GM18951 (cell line): ENCODE measurements at regions of chr5 and their contacts with region 1.

Region 1: DNA sequence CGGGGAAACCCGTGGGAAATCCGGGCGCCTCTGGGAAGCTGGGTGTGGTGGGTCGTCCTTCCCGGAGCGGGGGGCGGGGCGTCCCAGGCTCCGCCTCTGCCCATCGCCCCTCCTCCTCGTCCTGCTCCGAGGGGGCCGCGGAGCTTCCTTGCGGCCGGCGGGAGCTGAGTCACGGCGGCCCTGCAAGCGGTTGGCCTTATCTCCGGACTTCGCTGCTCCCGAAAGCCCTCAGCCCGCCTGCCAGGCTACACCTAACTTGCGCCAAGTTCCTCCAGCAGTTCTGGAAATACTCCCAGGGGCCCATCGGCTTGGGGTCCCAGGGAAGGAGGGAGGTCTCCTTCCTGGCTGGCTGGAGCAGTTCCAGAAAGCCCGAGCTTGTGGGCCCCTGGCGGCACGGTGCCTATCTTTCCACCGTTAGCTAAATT is 54.1 kb upstream of the CDKN2AIPNL start:
- POLR2A ChIP-seq: peak; percentile 85

Region 2: DNA sequence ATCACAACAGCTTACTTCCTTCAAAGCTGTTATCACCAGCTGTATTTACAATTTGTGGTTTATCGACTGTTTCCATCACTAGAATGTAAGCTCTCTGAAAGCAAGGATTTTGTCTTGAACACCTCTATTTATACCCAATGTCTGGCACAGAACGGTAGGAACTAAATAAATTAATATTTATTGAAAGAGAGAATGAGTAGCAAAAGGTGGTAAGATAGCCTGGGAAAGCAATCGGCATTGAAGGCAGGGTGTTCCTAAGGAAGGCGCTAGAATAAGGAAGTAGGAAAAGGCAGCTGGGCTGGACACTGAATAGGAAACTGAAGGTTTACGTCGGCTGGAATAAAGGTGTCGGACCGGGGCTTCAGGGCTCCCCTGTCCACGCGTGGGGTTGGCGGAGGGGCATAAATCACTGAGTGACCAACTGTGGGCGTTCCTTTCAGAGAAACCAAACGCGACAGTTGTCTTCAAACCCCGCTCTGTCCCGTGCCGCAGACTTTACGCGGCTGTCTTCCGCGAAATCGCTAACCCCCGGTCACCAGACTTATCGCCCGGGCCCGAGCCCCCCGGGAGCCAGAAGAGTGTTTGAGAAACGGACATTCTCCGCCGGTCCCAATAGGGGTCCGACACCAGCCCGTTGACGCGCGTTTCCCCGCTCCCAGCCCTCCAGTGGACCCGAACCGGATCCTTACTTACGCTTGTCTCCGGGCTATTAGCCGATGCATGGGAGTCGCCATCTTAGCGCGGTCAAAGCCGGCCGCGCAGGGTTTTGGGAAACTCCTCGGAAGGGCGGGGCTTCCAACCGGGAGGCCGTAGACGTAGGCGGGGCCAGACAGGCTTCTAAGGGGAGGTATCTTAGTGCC is 1439.8 kb before region 1 on chr5 and contains the start of gene ZCCHC10:
- in situ Hi-C with region 1: loop called (anchors 25 kb)
- POLR2A ChIP-seq: peak; percentile 90

Region 3: GRCh38 chr5:133610489-133611356 is 855.1 kb before region 1 on chr5:
- in situ Hi-C with region 1: no loop called
- POLR2A ChIP-seq: no peak

Region 4: DNA sequence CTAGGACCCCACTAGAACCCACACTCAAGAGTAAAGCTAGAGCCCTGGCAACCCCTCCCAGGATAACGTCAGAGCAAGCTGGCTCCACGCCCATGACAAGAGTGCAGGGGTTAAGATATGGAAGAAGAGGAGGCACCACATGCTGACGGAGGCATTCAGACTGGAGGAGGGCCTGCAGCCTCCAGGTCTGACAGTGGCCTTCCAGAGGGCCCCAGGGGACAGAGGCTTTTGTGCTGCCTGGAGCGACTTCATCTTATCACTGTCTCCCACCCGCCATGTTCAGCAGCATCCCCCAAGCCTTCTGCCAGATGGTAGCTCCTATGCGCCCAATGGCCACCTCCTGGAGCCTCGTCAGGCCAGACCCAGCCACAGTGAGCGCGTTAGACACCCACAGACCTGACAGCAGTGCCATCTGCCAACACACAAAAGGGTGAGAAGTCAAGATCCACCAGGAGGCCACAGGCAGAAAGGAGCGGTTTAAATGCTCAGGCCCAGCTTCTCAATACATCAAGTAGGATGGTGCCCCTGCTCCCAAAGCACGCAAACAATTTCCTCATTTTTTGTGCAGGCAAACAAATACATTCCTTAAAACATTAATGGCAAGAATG is 563.2 kb before region 1 on chr5:
- in situ Hi-C with region 1: no loop called
- POLR2A ChIP-seq: no peak

Region 5: DNA sequence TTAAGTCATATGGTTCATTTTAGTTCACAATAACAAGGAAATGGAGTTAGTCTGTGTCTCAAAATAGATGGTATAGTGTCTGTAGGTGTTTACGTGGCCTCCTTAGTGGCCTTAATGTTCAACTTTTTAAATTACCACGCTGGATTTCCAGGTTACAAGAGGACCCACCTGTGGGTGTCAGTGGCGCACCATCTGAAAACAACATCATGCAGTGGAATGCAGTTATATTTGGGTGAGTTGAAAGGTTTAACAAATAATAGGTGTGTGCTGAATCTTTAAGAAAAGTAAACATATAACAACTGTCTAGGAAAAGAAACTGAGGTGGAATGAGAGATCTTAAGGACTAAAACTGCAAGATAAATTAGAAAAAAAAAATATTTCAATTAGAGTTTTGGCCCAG is 91.6 kb before region 1 on chr5:
- in situ Hi-C with region 1: no loop called
- POLR2A ChIP-seq: no peak

Region 6: GRCh38 chr5:135497971-135498625 is 1032.3 kb after region 1 on chr5:
- in situ Hi-C with region 1: no loop called
- POLR2A ChIP-seq: no peak